GM12878 (cell line): ENCODE measurements at regions of chr11 and their contacts with region 1.

Region 1: GRCh38 chr11:119262668-119263351 is 54.1 kb downstream of the MCAM start:
- DNase-seq: peak; percentile 63
- ATAC-seq: peak; percentile 62
- H3K4me3 ChIP-seq: peak overlapping the region; percentile 52
- H3K27ac ChIP-seq: peak overlapping the region; percentile 83
- H3K4me1 ChIP-seq: peaks cover 47% of the 10 kb centered on the region
- H3K27me3 ChIP-seq: no peaks in the 10 kb centered on the region
- CTCF ChIP-seq: peak in 2 of 3 experiments; percentile 8 to 20; a peak in 1 of 6 replicates
- EP300 ChIP-seq: no peak
- POLR2A ChIP-seq: no peak
- RAD21 ChIP-seq: no peak

Region 2: DNA sequence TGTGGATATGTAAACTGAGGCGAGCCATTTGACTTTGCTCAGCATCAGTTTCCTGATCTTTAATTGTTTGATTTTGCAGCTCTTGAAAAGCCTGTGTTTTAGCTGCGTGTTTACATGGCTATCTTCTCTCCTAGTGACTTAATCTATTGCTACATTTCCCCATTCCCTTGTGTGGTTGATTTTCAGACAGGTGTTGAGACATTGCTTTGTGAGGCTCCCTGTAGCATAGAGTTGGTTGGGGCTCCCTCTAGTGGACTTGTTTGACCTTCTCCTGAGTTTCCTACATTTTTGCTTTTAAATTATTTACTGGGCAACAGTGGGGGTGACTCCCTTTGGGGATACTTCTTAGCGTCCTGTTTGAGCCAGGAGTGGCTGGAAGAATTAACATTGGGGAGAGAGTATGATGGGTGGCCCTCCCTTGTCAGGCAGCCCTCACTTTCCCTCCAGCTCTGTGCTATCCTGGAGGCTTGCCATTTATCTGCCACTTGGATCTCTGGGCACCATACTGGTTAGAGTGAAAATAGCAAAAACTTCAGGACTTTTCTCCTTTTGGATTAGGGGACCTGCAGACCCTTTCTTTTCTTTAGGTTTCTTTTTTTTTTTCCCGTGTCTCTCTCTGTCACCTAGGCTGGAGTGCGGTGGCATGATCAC is 65.9 kb before region 1 on chr11:
- CTCF ChIA-PET with region 1: interaction called, 15 read pairs
- POLR2A ChIA-PET with region 1: interaction called, 3 read pairs
- RAD21 ChIA-PET with region 1: no interaction called
- SMC1A ChIA-PET with region 1: interaction called, 5 read pairs
- in situ Hi-C with region 1: no loop called
- intact Hi-C with region 1: no loop called
- DNase-seq: peak; percentile 59
- ATAC-seq: peak; percentile 97
- H3K4me3 ChIP-seq: no peak overlapping the region
- H3K27ac ChIP-seq: no peak overlapping the region
- H3K4me1 ChIP-seq: no peaks in the 10 kb centered on the region
- H3K27me3 ChIP-seq: 0 out of 4 replicates have a peak, but pooled peaks cover 0 to 2% of the 10 kb centered on the region in 2 experiments
- CTCF ChIP-seq: peak; percentile 75 to 92 (median 84)
- EP300 ChIP-seq: no peak
- POLR2A ChIP-seq: no peak
- RAD21 ChIP-seq: peak; percentile 92

Region 3: DNA sequence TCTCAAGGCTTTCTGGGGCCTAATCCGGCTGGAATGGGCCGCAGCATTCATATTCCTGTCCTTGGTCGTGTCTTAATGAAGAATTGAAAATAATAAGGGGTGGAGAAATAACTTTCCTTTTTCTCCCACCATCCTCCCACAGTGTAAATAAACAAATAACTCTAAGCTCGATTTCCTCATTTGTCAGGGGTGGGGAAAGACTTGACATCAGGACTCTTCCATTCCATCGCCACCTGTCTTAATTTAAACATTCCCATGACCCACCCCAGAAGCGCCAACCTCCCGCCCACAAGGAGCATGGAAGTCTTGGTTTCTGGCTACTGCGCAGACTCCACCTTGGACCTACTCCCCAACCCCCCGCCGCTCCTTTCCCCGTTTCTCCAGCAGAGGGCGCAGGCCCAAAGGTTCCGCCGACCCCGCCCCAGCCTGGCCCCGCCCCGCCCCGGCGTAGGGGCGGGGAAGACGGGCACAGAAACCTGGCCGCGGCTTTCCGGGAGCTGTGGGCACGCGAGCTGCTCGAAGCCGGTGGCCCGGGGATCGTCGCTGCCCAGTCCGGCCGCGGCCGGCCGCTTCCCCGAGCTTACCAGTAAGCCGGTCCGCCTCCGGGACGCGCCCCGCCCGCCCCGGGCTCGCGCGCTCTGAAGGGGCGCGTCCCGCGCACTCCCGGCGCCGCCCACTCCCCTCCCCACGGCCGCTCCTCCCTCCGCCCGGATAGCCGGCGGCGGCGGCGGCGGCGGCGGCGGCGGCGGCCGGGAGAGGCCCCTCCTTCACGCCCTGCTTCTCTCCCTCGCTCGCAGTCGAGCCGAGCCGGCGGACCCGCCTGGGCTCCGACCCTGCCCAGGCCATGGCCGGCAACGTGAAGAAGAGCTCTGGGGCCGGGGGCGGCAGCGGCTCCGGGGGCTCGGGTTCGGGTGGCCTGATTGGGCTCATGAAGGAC is 57.0 kb before region 1 on chr11 and contains the start of gene CBL:
- CTCF ChIA-PET with region 1: interaction called, 34 read pairs
- POLR2A ChIA-PET with region 1: interaction called, 19 read pairs
- RAD21 ChIA-PET with region 1: interaction called, 44 read pairs
- SMC1A ChIA-PET with region 1: interaction called, 42 read pairs
- in situ Hi-C with region 1: no loop called
- intact Hi-C with region 1: loop called (anchors 1 kb)
- DNase-seq: peak; percentile 47
- ATAC-seq: peak; percentile 91
- H3K4me3 ChIP-seq: peak within 1 kb of the TSS; percentile 93
- H3K27ac ChIP-seq: peak within 1 kb of the TSS; percentile 88
- H3K4me1 ChIP-seq: peaks cover 9% of the 10 kb centered on the region
- H3K27me3 ChIP-seq: no peaks in the 10 kb centered on the region
- CTCF ChIP-seq: peak; percentile 85 to 92 (median 91)
- EP300 ChIP-seq: no peak
- POLR2A ChIP-seq: peak; percentile 81
- RAD21 ChIP-seq: peak; percentile 62
- polyA plus RNA-seq, gene CBL: 3.9 to 7.6 TPM

Region 4: GRCh38 chr11:119249671-119250010 is 13.2 kb before region 1 on chr11:
- CTCF ChIA-PET with region 1: interaction called, 15 read pairs
- POLR2A ChIA-PET with region 1: interaction called, 29 read pairs
- RAD21 ChIA-PET with region 1: interaction called, 20 read pairs
- SMC1A ChIA-PET with region 1: interaction called, 40 read pairs
- in situ Hi-C with region 1: no loop called
- intact Hi-C with region 1: no loop called
- DNase-seq: no peak
- ATAC-seq: peak; percentile 39
- H3K4me3 ChIP-seq: no peak overlapping the region
- H3K27ac ChIP-seq: no peak overlapping the region
- H3K4me1 ChIP-seq: peaks cover 21% of the 10 kb centered on the region
- H3K27me3 ChIP-seq: no peaks in the 10 kb centered on the region
- CTCF ChIP-seq: no peak
- EP300 ChIP-seq: no peak
- POLR2A ChIP-seq: no peak
- RAD21 ChIP-seq: no peak

Region 5: GRCh38 chr11:119277660-119278059 is 14.8 kb after region 1 on chr11:
- CTCF ChIA-PET with region 1: interaction called, 11 read pairs
- POLR2A ChIA-PET with region 1: interaction called, 6 read pairs
- RAD21 ChIA-PET with region 1: interaction called, 11 read pairs
- SMC1A ChIA-PET with region 1: interaction called, 23 read pairs
- in situ Hi-C with region 1: no loop called
- intact Hi-C with region 1: no loop called
- DNase-seq: no peak
- ATAC-seq: no peak
- H3K4me3 ChIP-seq: no peak overlapping the region
- H3K27ac ChIP-seq: no peak overlapping the region
- H3K4me1 ChIP-seq: no peaks in the 10 kb centered on the region
- H3K27me3 ChIP-seq: no peaks in the 10 kb centered on the region
- CTCF ChIP-seq: no peak
- EP300 ChIP-seq: no peak
- POLR2A ChIP-seq: no peak
- RAD21 ChIP-seq: no peak

Region 6: DNA sequence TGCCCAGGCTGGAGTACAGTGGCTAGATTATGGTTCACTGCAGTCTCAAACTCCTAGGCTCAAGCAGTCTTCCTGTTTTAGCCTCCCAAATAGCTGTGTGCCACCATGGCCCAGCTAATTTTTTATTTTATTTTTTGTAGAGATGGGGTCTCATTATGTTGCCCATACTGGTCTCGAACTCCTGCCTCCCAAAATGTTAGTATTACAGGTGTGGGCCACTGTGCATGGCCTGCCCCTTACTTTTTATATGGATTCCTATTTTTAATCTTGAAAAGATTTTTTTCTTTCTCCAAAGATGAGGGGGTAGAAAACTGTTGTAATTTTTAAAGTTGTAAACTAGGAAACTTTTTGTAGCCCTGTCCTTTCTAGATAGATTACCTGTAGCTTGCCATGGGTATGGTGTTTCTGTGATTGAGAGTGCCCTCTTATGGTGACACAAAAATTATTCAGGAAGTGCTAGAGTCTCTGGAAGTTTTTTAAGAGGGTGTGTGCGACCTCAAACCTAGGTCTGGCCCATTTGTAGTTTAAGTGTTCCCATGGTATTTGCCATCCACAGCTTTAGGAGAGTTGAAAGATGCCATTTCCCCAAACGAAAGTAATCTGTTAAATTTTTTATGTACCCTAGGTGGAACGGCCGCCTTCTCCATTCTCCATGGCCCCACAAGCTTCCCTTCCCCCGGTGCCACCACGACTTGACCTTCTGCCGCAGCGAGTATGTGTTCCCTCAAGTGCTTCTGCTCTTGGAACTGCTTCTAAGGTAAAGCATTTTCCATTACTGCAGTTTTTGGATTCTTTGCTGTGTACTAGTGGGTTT is 21.7 kb after region 1 on chr11:
- CTCF ChIA-PET with region 1: interaction called, 14 read pairs
- POLR2A ChIA-PET with region 1: interaction called, 6 read pairs
- RAD21 ChIA-PET with region 1: interaction called, 11 read pairs
- SMC1A ChIA-PET with region 1: interaction called, 8 read pairs
- in situ Hi-C with region 1: no loop called
- intact Hi-C with region 1: no loop called
- DNase-seq: no peak
- ATAC-seq: peak; percentile 93
- H3K4me3 ChIP-seq: no peak overlapping the region
- H3K27ac ChIP-seq: no peak overlapping the region
- H3K4me1 ChIP-seq: no peaks in the 10 kb centered on the region
- H3K27me3 ChIP-seq: no peaks in the 10 kb centered on the region
- CTCF ChIP-seq: peak; percentile 48 to 75 (median 55)
- EP300 ChIP-seq: no peak
- POLR2A ChIP-seq: no peak
- RAD21 ChIP-seq: peak; percentile 82

Region 7: GRCh38 chr11:119567688-119568582 is 305.1 kb after region 1 on chr11:
- CTCF ChIA-PET with region 1: no interaction called
- POLR2A ChIA-PET with region 1: no interaction called
- RAD21 ChIA-PET with region 1: no interaction called
- SMC1A ChIA-PET with region 1: no interaction called
- in situ Hi-C with region 1: no loop called
- intact Hi-C with region 1: no loop called
- DNase-seq: peak; percentile 56
- ATAC-seq: peak; percentile 90
- H3K4me3 ChIP-seq: no peak overlapping the region
- H3K27ac ChIP-seq: no peak overlapping the region
- H3K4me1 ChIP-seq: peaks cover 6% of the 10 kb centered on the region
- H3K27me3 ChIP-seq: no peaks in the 10 kb centered on the region
- CTCF ChIP-seq: no peak
- EP300 ChIP-seq: 0 out of 4 replicates have a peak, but pooled peaks of 1 of the 2 experiments have one; percentile 4
- POLR2A ChIP-seq: no peak
- RAD21 ChIP-seq: no peak